Transverse colon (tissue), 4 donors: ENCODE measurements at regions of chr20 and their contacts with region 1.

Region 1: GRCh38 chr20:57061058-57061900 is 205.2 kb downstream of the BMP7 start:
- DNase-seq: no peak
- H3K4me3 ChIP-seq: no peak overlapping the region
- H3K27ac ChIP-seq: no peak overlapping the region
- H3K4me1 ChIP-seq: no peaks in the 10 kb centered on the region
- H3K27me3 ChIP-seq: peaks cover 26% of the 10 kb centered on the region
- CTCF ChIP-seq: peak in 2 of 5 experiments; percentile 11 to 18
- EP300 ChIP-seq: no peak
- POLR2A ChIP-seq: no peak

Region 2: DNA sequence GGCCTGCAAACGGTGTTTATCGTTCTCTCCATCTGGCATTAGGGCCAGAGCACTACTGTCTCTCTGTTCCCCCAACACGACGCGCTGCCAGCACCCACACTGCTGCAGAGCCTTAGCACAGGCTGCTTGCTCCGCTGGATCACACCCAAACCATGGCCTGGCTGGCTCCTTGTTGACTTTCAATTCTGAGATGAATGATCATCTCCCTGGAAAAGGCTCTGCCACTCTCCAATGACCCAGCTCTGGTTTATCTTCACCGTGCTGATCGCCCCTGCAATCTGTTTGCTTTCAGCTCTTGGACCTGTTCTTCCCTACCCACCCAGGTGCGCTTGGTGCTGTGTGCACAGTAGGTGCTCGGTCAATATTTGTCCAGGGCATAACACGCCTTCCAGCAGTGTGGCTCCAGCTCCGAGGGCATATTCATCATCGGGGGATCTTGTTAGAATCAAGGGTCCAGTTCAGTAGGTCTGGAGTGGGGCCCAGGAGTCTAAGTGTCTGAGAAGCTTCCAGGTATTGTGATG is 326.0 kb before region 1 on chr20:
- in situ Hi-C with region 1: no loop called
- intact Hi-C with region 1: no loop called
- DNase-seq: no peak
- H3K4me3 ChIP-seq: no peak overlapping the region
- H3K27ac ChIP-seq: no peak overlapping the region
- H3K4me1 ChIP-seq: peaks cover 0 to 4% (median 0%) of the 10 kb centered on the region in 4 donors
- H3K27me3 ChIP-seq: peaks cover 22% of the 10 kb centered on the region
- CTCF ChIP-seq: no peak
- EP300 ChIP-seq: no peak
- POLR2A ChIP-seq: no peak

Region 3: GRCh38 chr20:57082357-57082945 is 21.2 kb after region 1 on chr20:
- in situ Hi-C with region 1: no loop called
- intact Hi-C with region 1: loop called (anchors 1 kb)
- DNase-seq: no peak
- H3K4me3 ChIP-seq: no peak overlapping the region
- H3K27ac ChIP-seq: no peak overlapping the region
- H3K4me1 ChIP-seq: no peaks in the 10 kb centered on the region
- H3K27me3 ChIP-seq: peaks cover 4% of the 10 kb centered on the region
- CTCF ChIP-seq: no peak
- EP300 ChIP-seq: no peak
- POLR2A ChIP-seq: no peak